Transverse colon (tissue), 4 donors: ENCODE measurements at regions of chr11 and their contacts with region 1.

Region 1: DNA sequence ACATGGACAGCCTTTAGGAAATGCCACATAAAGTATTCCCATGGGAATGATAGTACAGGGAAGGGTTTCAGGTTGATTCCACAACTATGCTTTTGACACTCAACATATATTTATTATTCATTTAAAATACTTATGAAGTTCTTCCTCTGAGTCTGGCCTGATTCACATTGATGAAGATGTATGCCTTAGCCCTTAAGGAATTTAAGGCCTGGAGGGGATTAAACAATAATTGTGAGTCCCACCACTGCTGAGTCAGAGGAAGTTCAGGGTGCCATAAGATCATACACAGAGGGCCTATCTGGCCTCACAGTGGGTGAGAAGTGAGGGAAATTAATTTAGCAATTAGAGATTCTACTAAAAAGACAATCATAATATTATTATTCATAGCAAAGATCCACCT is 161.1 kb upstream of the SNX19 start:
- DNase-seq: no peak
- H3K4me3 ChIP-seq: no peak overlapping the region
- H3K27ac ChIP-seq: no peak overlapping the region
- H3K4me1 ChIP-seq: no peaks in the 10 kb centered on the region
- H3K27me3 ChIP-seq: no peaks in the 10 kb centered on the region
- CTCF ChIP-seq: no peak
- EP300 ChIP-seq: no peak
- POLR2A ChIP-seq: no peak

Region 2: GRCh38 chr11:130677486-130678153 is 399.7 kb before region 1 on chr11:
- in situ Hi-C with region 1: no loop called
- intact Hi-C with region 1: loop called (anchors 5 kb)
- DNase-seq: no peak
- H3K4me3 ChIP-seq: no peak overlapping the region
- H3K27ac ChIP-seq: peak overlapping the region in 1 of 4 donors; percentile 22
- H3K4me1 ChIP-seq: peaks cover 3 to 21% (median 5%) of the 10 kb centered on the region in 4 donors
- H3K27me3 ChIP-seq: no peaks in the 10 kb centered on the region
- CTCF ChIP-seq: no peak
- EP300 ChIP-seq: no peak
- POLR2A ChIP-seq: no peak